Activated CD4-positive, alpha-beta T cell treated with anti-CD3 and anti-CD28 coated beads for 36 hours (primary cell): ENCODE measurements at regions of chr1 and their contacts with region 1.

Region 1: GRCh38 chr1:157073944-157074767 is 25.5 kb downstream of the ETV3L start:
- DNase-seq: peak; percentile 68
- ATAC-seq: no peak
- H3K4me3 Mint-ChIP-seq: no peak overlapping the region
- H3K27ac Mint-ChIP-seq: no peak overlapping the region
- H3K4me1 Mint-ChIP-seq: no peaks in the 10 kb centered on the region
- H3K27me3 Mint-ChIP-seq: peaks cover 18% of the 10 kb centered on the region

Region 2: DNA sequence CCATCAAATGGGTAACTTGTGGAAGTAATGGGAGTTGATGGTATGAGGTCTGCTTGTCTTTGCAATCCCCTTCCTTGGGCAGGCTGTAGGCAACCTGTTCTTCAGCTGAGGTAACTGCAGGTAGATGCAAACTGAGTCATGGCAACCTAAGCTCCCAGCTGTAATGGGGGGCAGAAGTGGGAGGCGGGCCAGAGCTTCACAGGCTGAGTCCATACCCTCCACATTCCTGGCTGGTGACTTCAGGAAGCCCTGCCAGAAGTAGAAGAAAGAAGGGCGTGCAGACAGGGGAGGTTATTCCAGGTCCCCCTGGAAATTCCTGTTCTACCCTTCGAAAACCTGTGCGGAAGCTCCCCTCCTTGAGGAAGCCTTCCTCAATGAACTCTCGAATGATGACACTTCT is 73.5 kb before region 1 on chr1:
- CTCF ChIA-PET with region 1: interaction called, 3 read pairs
- POLR2A ChIA-PET with region 1: no interaction called
- intact Hi-C with region 1: loop called in 1 of 2 experiments (anchors 10 kb)
- DNase-seq: no peak
- ATAC-seq: no peak
- H3K4me3 Mint-ChIP-seq: no peak overlapping the region
- H3K27ac Mint-ChIP-seq: no peak overlapping the region
- H3K4me1 Mint-ChIP-seq: no peaks in the 10 kb centered on the region
- H3K27me3 Mint-ChIP-seq: peaks cover 7% of the 10 kb centered on the region